PC-9 (cell line): ENCODE measurements at regions of chr16 and their contacts with region 1.

Region 1: DNA sequence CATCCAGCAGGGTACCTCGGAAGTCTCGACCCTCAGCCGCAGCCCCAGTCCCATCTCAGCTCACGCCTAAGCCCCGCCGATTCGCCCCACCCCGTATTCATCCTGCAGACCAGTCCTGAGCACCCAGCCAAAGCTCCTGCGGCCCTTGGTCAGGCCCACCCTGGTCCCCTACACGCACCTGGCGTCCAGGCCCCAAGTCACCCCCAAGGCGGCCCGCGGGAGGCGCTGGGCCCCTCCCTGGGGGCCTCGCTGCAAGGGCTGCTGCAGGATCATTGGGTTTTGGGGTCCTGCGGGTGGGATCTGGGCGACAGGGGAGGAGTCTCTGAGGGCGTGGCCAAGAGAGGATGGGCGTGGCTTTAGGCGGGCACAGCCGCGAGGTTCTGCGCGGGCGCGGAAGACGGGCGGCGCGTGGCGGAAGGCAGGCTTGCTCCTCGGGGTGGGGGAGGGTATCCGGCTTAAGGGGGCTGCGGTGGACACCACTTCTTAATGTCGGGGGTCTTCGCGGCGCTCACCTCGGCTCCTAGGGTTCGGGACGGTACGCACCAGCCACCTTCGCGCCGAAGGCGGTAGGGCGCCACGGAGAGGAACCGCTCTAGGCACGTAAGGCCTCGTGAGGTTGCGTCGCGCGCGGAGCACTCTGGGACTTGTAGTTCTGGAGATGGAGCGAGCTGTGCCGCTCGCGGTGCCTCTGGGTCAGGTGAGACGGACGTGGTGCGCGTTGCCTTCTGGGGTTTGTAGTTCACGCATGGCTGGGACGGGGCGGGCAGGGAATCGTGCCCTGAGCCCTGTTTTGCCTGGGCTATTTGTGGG is at the starts of genes HCFC1R1 and THOC6:
- DNase-seq: peak; percentile 93 to 98
- H3K4me3 ChIP-seq: peak within 1 kb of the TSS; percentile 76
- H3K27ac ChIP-seq: peak within 1 kb of the TSS; percentile 97
- H3K4me1 ChIP-seq: peaks cover 13% of the 10 kb centered on the region
- H3K27me3 ChIP-seq: no peaks in the 10 kb centered on the region
- CTCF ChIP-seq: no peak
- total RNA-seq, gene HCFC1R1: 118 and 186 TPM in 2 replicates
- total RNA-seq, gene THOC6: 69.9 and 109 TPM in 2 replicates

Region 2: DNA sequence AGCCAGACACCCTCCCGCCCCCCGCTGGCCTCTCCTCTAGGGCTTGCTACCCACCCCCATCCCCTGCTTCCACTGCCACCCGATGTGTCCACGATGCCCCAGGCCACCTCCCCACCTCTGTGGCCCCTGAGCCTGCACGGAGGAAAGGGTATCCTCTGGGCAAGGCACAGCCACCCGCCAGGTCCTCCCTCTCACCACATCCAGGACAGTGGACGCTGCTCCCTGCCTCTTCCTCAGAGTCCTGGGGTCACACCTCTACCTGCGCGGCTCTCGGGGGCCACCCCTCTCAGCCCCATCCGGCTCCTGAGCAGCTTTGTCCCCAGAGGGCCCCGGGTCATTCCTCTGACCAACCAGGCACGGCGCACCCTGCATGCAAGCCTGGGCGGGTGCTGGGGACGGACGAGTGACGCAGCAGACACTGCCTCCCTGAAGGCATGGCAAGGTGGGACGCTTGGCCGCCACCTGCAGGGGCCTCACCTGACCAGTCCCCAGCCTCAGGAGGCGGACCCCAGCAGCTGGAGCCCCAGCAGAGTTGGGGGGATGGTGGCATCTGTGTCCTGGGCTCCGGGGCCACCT is 87.3 kb before region 1 on chr16:
- CTCF ChIA-PET with region 1: no interaction called
- POLR2A ChIA-PET with region 1: no interaction called
- intact Hi-C with region 1: no loop called
- DNase-seq: no peak
- H3K4me3 ChIP-seq: no peak overlapping the region
- H3K27ac ChIP-seq: no peak overlapping the region
- H3K4me1 ChIP-seq: no peaks in the 10 kb centered on the region
- H3K27me3 ChIP-seq: no peaks in the 10 kb centered on the region
- CTCF ChIP-seq: no peak

Region 3: GRCh38 chr16:2990891-2991290 is 33.0 kb before region 1 on chr16:
- CTCF ChIA-PET with region 1: interaction called, 7 read pairs
- POLR2A ChIA-PET with region 1: interaction called, 41 read pairs
- intact Hi-C with region 1: loop called (anchors 1 kb)
- DNase-seq: peak in 1 of 2 experiments; percentile 87
- H3K4me3 ChIP-seq: no peak overlapping the region
- H3K27ac ChIP-seq: no peak overlapping the region
- H3K4me1 ChIP-seq: peaks cover 23% of the 10 kb centered on the region; the same call in 1 of the 2 replicates
- H3K27me3 ChIP-seq: no peaks in the 10 kb centered on the region
- CTCF ChIP-seq: no peak

Region 4: GRCh38 chr16:3106205-3106928 is 82.5 kb after region 1 on chr16:
- CTCF ChIA-PET with region 1: no interaction called
- POLR2A ChIA-PET with region 1: interaction called, 11 read pairs
- intact Hi-C with region 1: no loop called
- DNase-seq: peak; percentile 80 to 96
- H3K4me3 ChIP-seq: peak overlapping the region; percentile 97
- H3K27ac ChIP-seq: peak overlapping the region; percentile 59
- H3K4me1 ChIP-seq: peaks cover 6% of the 10 kb centered on the region
- H3K27me3 ChIP-seq: no peaks in the 10 kb centered on the region
- CTCF ChIP-seq: no peak

Region 5: GRCh38 chr16:3182608-3183444 is 159.0 kb after region 1 on chr16:
- CTCF ChIA-PET with region 1: interaction called, 15 read pairs
- POLR2A ChIA-PET with region 1: no interaction called
- intact Hi-C with region 1: no loop called
- DNase-seq: peak in 1 of 2 experiments; percentile 60
- H3K4me3 ChIP-seq: peak overlapping the region; percentile 71
- H3K27ac ChIP-seq: no peak overlapping the region
- H3K4me1 ChIP-seq: 0 out of 2 replicates have a peak, but pooled peaks cover 5% of the 10 kb centered on the region
- H3K27me3 ChIP-seq: no peaks in the 10 kb centered on the region
- CTCF ChIP-seq: peak; percentile 57

Region 6: DNA sequence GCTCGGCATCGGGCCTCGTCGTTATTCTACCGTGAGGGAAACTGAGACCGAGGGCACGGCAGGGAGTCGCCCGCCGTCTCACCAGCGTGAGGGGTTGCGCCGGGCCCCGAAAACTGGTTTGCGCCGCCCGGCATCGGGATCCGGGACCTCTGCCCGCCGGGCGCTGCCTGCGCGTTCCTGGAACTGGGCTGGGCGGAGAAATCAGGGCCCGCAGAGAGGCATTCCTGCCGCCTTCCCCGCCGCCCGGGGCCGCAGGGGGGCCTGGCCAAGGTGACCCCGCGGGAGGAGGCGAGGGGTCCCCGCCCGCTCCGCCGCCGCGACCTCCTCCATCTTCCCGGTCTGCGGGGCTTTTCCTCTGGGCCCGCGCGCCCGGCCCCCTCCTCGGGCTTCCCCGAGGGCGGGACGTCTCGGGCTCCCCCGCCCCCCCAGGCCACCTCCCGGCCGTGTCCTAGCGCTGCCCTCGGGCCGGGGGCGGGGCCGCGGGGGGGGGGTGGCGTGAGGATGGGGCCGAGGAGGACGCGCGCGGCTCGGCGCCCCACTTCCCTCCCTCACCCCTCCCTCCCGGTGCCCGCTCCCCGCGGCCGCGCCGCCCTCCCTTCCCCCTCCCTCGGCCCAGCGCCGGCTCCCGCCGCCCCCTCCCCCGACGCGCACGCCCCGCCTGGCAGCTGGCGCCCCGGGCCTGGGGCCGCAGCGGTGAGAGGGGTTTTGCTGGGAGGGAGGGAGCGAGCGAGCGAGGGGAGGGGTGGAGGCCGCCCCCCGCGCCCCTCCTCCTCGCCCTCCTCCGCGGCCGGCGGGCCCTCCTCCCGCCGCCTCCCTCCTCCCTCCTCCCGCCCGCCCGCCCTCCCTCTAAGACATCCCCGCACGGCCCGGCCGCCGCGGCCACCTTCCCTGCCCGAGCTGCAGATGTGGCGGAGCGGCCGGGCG is 1291.6 kb after region 1 on chr16 and contains the start of gene GLIS2:
- CTCF ChIA-PET with region 1: no interaction called
- POLR2A ChIA-PET with region 1: interaction called, 24 read pairs
- intact Hi-C with region 1: no loop called
- DNase-seq: peak in 1 of 2 experiments; percentile 85
- H3K4me3 ChIP-seq: peak within 1 kb of the TSS; percentile 78
- H3K27ac ChIP-seq: no peak within 1 kb of the TSS
- H3K4me1 ChIP-seq: peaks cover 20% of the 10 kb centered on the region
- H3K27me3 ChIP-seq: no peaks in the 10 kb centered on the region
- CTCF ChIP-seq: no peak
- total RNA-seq, gene GLIS2: 44.2 and 48.3 TPM in 2 replicates

Region 7: DNA sequence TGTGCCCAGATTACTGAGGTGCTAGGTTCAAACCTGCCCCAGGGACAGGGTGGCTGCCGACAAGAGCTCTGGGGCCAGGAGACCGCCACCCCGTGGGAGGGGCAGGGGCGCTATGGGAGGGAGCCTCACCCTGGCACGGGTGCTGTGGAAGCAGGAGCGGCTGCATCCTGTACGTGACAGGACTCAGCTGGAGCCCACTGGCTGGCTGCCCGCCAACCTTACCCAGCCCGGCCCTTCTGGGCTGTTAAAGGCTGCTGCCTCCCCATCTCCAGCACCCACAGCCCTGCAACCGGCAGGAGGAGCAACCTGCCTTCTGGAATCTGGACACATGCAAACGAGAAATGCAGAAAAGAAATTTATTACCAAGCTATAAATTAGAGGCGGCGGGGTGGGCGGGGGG is 1316.0 kb after region 1 on chr16:
- CTCF ChIA-PET with region 1: no interaction called
- POLR2A ChIA-PET with region 1: no interaction called
- intact Hi-C with region 1: no loop called
- DNase-seq: no peak
- H3K4me3 ChIP-seq: no peak overlapping the region
- H3K27ac ChIP-seq: no peak overlapping the region
- H3K4me1 ChIP-seq: no peaks in the 10 kb centered on the region
- H3K27me3 ChIP-seq: no peaks in the 10 kb centered on the region
- CTCF ChIP-seq: no peak